Naive thymus-derived CD4-positive, alpha-beta T cell (primary cell): ENCODE measurements at regions of chr19 and their contacts with region 1.

Region 1: DNA sequence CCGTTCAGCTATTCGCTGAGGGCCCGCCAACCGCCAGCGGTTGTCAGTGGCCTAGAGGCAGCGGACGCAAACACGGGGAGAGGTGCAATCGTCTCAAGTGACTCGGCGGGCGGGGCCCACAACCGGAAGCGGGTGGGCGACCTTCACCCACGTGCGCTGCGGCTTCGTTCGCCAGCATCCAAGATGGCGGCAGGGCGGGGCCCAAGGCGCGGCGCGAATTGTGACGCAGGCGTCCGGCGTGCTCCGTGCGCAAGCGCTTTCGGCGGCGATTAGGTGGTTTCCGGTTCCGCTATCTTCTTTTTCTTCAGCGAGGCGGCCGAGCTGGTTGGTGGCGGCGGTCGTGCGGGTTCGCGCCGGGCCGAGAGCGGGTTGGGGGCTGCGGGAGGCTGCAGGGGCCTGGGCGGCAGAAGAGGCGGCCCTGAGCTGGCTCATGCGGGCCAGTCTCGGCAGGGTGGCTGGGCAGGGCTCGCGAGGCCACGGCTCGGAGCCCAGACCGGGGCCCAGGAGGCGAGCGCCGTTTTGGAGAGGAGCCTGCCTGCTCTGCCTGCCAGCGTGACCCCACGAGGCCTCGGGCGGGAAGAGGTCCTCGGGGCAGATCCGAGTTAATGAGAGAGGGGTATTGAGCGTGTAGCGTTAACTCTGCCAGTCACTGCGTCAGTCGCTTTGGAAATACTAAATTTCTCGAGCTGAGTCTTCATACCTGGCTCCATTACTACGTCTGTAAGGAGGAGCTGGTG is at the start of gene UBA52:
- DNase-seq: peak; percentile 97 to 99 (median 98)
- ATAC-seq: peak; percentile 97
- H3K4me3 ChIP-seq: peak within 1 kb of the TSS; percentile 91
- H3K4me3 Mint-ChIP-seq: peak within 1 kb of the TSS; percentile 83 to 97 (median 91)
- H3K27ac ChIP-seq: peak within 1 kb of the TSS; percentile 94
- H3K27ac Mint-ChIP-seq: peak within 1 kb of the TSS; percentile 92 to 99 (median 96)
- H3K4me1 ChIP-seq: peaks cover 17% of the 10 kb centered on the region in 2 donors
- H3K4me1 Mint-ChIP-seq: peaks cover 14 to 38% (median 26%) of the 10 kb centered on the region in 7 donors
- H3K27me3 ChIP-seq: no peaks in the 10 kb centered on the region
- H3K27me3 Mint-ChIP-seq: peaks cover 0 to 2% (median 0%) of the 10 kb centered on the region in 5 donors
- total RNA-seq, gene UBA52: 1,563 to 2,429 (median 2,196) TPM

Region 2: GRCh38 chr19:18478569-18479311 is 93.0 kb before region 1 on chr19:
- CTCF ChIA-PET with region 1: no interaction called
- POLR2A ChIA-PET with region 1: no interaction called
- intact Hi-C with region 1: loop called in 1 of 2 experiments (anchors 10 kb)
- DNase-seq: peak in 1 of 9 donors; percentile 75
- ATAC-seq: peak; percentile 76
- H3K4me3 ChIP-seq: no peak overlapping the region
- H3K4me3 Mint-ChIP-seq: peak overlapping the region in 8 of 10 donors; percentile 47 to 79 (median 56)
- H3K27ac ChIP-seq: no peak overlapping the region
- H3K27ac Mint-ChIP-seq: peak overlapping the region; percentile 38 to 91 (median 69)
- H3K4me1 ChIP-seq: peaks cover 15 to 63% of the 10 kb centered on the region in 2 donors
- H3K4me1 Mint-ChIP-seq: peaks cover 52 to 80% (median 68%) of the 10 kb centered on the region in 7 donors
- H3K27me3 ChIP-seq: no peaks in the 10 kb centered on the region
- H3K27me3 Mint-ChIP-seq: no peaks in the 10 kb centered on the region

Region 3: GRCh38 chr19:18542936-18543815 is 28.6 kb before region 1 on chr19 and contains the start of gene FKBP8:
- CTCF ChIA-PET with region 1: no interaction called
- POLR2A ChIA-PET with region 1: interaction called, 18 read pairs
- intact Hi-C with region 1: loop called (anchors 1 kb)
- DNase-seq: peak; percentile 84 to 95 (median 91)
- ATAC-seq: peak; percentile 97
- H3K4me3 ChIP-seq: peak within 1 kb of the TSS; percentile 68
- H3K4me3 Mint-ChIP-seq: peak within 1 kb of the TSS; percentile 90 to 99 (median 94)
- H3K27ac ChIP-seq: peak within 1 kb of the TSS; percentile 87
- H3K27ac Mint-ChIP-seq: peak within 1 kb of the TSS; percentile 89 to 100 (median 97)
- H3K4me1 ChIP-seq: peaks cover 15 to 16% of the 10 kb centered on the region in 2 donors
- H3K4me1 Mint-ChIP-seq: peaks cover 14 to 31% (median 26%) of the 10 kb centered on the region in 7 donors
- H3K27me3 ChIP-seq: no peaks in the 10 kb centered on the region
- H3K27me3 Mint-ChIP-seq: no peaks in the 10 kb centered on the region
- total RNA-seq, gene FKBP8: 137 to 241 (median 221) TPM

Region 4: GRCh38 chr19:18557474-18558201 is 14.1 kb before region 1 on chr19 and contains the start of gene KXD1:
- CTCF ChIA-PET with region 1: interaction called, 11 read pairs
- POLR2A ChIA-PET with region 1: interaction called, 47 read pairs
- intact Hi-C with region 1: loop called (anchors 1 kb)
- DNase-seq: peak; percentile 89 to 99 (median 97)
- ATAC-seq: peak; percentile 100
- H3K4me3 ChIP-seq: peak within 1 kb of the TSS; percentile 84
- H3K4me3 Mint-ChIP-seq: peak within 1 kb of the TSS; percentile 83 to 93 (median 91)
- H3K27ac ChIP-seq: peak within 1 kb of the TSS; percentile 95
- H3K27ac Mint-ChIP-seq: peak within 1 kb of the TSS; percentile 87 to 97 (median 96)
- H3K4me1 ChIP-seq: peaks cover 13 to 15% of the 10 kb centered on the region in 2 donors
- H3K4me1 Mint-ChIP-seq: peaks cover 6 to 25% (median 23%) of the 10 kb centered on the region in 7 donors
- H3K27me3 ChIP-seq: no peaks in the 10 kb centered on the region
- H3K27me3 Mint-ChIP-seq: no peaks in the 10 kb centered on the region
- total RNA-seq, gene KXD1: 74.7 to 108 (median 99.9) TPM

Region 5: GRCh38 chr19:18612772-18613588 is 41.2 kb after region 1 on chr19 and contains the start of gene TMEM59L:
- CTCF ChIA-PET with region 1: no interaction called
- POLR2A ChIA-PET with region 1: no interaction called
- intact Hi-C with region 1: no loop called
- DNase-seq: peak in 8 of 9 donors; percentile 36 to 68 (median 51)
- ATAC-seq: peak; percentile 73
- H3K4me3 ChIP-seq: peak within 1 kb of the TSS; percentile 61
- H3K4me3 Mint-ChIP-seq: peak within 1 kb of the TSS; percentile 71 to 87 (median 79)
- H3K27ac ChIP-seq: no peak within 1 kb of the TSS
- H3K27ac Mint-ChIP-seq: peak within 1 kb of the TSS in 3 of 9 donors; percentile 55 to 77 (median 62)
- H3K4me1 ChIP-seq: peaks cover 12% of the 10 kb centered on the region in 2 donors
- H3K4me1 Mint-ChIP-seq: peaks cover 6 to 28% (median 18%) of the 10 kb centered on the region in 7 donors
- H3K27me3 ChIP-seq: peaks cover 11 to 26% of the 10 kb centered on the region in 2 donors
- H3K27me3 Mint-ChIP-seq: peaks cover 49 to 75% (median 70%) of the 10 kb centered on the region in 5 donors
- total RNA-seq, gene TMEM59L: 0.22 to 0.24 TPM in 2 of 5 experiments, not detected in the others

Region 6: DNA sequence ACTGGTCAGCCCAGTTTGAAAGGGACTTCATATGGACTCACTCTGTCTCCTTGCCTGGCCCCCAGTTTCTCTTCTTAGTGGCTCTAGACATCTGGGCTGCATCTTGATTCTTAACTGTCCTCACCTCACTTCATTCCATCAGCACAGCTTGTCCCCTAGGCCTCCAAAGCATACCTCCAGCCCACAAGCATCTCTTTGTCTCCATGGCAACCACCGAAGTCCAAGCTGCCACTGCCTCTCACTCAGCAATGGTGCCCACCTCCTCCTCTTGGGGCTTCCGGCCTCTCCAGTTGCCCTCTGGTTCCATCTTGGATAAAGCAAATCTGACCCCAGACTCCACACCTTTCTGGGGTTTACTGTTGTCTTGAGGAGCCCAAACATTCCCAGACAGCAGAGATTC is 55.2 kb after region 1 on chr19:
- CTCF ChIA-PET with region 1: no interaction called
- POLR2A ChIA-PET with region 1: no interaction called
- intact Hi-C with region 1: no loop called
- DNase-seq: no peak
- ATAC-seq: no peak
- H3K4me3 ChIP-seq: no peak overlapping the region
- H3K4me3 Mint-ChIP-seq: no peak overlapping the region
- H3K27ac ChIP-seq: no peak overlapping the region
- H3K27ac Mint-ChIP-seq: no peak overlapping the region
- H3K4me1 ChIP-seq: no peaks in the 10 kb centered on the region
- H3K4me1 Mint-ChIP-seq: no peaks in the 10 kb centered on the region
- H3K27me3 ChIP-seq: no peaks in the 10 kb centered on the region
- H3K27me3 Mint-ChIP-seq: peaks cover 0 to 5% (median 0%) of the 10 kb centered on the region in 5 donors

Region 7: DNA sequence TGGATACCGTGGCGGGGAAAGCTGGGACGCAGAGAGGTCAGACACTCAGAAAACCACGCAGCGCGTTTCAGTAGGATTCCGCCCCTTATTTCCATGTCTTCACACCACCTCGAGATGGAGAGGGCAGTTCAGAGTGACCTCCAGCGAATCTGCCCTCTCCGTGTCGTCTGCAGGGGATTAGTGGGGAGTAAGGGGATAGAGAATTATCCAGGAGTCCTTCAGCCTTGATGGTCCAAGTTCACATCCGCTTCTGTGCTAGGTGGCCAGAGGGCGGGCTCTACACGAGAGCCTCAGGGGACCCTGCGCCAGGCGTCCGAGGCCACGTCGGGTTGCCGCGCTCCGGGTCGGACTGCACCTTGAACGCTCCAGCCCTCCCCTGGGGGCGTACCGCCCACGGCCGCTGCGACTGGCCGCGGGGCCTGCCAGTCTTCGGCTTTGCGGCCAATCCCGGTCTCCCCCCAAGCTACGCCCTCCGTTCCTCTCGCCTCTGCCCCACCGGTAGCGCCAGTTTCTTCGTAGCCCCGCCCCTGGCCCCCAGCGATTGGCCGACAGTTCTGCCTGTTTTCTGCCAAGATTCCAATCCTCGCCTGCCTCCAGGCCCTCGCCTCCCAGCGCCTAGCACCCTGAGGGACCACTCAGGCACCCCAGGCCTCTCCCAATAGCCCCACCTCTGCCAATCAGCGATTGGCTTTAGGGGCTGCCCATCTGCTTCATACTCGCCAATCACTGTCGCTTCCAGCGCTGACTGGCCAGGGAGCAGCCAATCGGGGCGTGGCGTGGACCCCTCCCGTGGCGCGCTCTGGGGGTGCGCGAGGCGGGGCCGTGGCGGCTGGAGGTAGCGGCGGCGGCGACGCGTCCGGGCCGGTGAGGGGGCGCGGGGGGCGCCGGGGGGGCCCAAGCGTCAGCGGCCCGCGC is 491.7 kb after region 1 on chr19 and contains the start of gene SLC25A42:
- CTCF ChIA-PET with region 1: no interaction called
- POLR2A ChIA-PET with region 1: no interaction called
- intact Hi-C with region 1: no loop called
- DNase-seq: peak; percentile 93 to 100 (median 99)
- ATAC-seq: peak; percentile 95
- H3K4me3 ChIP-seq: peak within 1 kb of the TSS; percentile 82
- H3K4me3 Mint-ChIP-seq: peak within 1 kb of the TSS; percentile 83 to 99 (median 92)
- H3K27ac ChIP-seq: peak within 1 kb of the TSS; percentile 83
- H3K27ac Mint-ChIP-seq: peak within 1 kb of the TSS; percentile 75 to 98 (median 83)
- H3K4me1 ChIP-seq: peaks cover 11 to 15% of the 10 kb centered on the region in 2 donors
- H3K4me1 Mint-ChIP-seq: peaks cover 5 to 41% (median 35%) of the 10 kb centered on the region in 7 donors
- H3K27me3 ChIP-seq: no peaks in the 10 kb centered on the region
- H3K27me3 Mint-ChIP-seq: no peaks in the 10 kb centered on the region
- total RNA-seq, gene SLC25A42: 19.0 to 36.1 (median 21.6) TPM